OCI-LY7 (cell line): ENCODE measurements at regions of chr12 and their contacts with region 1.

Region 1: DNA sequence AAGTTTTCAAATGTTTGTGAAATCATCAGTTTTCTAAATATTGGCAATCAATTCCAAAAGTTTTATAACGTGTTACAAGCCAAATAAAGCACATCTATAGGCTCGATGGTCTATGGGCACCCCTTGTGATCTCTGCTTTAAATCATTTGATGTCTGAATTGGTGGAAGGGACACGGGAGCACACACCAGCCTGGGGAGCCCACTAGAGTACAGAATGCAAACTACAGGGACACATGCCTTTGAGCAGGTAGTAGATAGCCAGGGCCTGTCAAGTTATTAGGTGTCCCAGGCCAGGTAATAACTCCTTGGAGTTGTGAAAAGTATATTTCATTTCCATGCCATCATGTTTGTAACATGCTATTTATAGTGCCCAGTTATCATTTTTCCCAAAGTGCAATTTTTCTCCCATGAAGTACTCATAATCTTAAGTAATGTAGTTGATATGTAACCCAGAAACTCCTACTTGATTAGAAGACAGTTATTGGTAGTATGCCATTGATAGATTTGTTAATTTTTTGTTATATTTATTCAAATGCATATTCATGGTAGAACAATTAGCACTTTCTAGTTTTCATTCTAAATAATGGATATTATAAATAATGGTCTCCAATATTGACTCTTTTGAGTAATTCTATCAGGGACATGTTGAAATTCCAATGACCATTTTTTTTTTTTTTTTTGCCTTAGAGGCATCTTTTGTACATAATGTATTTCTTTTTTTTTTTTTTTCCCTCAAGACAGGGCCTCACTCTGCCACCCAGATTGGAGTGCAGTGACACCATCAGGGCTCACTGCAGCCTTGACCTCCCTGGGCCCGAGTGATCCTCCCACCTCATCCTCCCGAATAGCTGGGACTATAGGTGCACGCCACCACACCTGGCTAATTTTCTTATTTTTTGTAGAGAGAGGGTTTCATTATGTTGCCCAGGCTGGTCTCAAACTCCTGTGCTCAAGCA is 96.9 kb upstream of the FGD4 start:
- DNase-seq: peak; percentile 89
- H3K4me3 ChIP-seq: peak overlapping the region; percentile 36
- H3K27ac ChIP-seq: peak overlapping the region; percentile 94
- H3K4me1 ChIP-seq: peaks cover 71% of the 10 kb centered on the region
- CTCF ChIP-seq: peak; percentile 93

Region 2: GRCh38 chr12:31682136-31682962 is 620.1 kb before region 1 on chr12:
- CTCF ChIA-PET with region 1: no interaction called
- POLR2A ChIA-PET with region 1: no interaction called
- intact Hi-C with region 1: loop called (anchors 1 kb)
- DNase-seq: peak; percentile 95
- H3K4me3 ChIP-seq: no peak overlapping the region
- H3K27ac ChIP-seq: peak overlapping the region; percentile 56
- H3K4me1 ChIP-seq: peaks cover 34% of the 10 kb centered on the region
- CTCF ChIP-seq: peak; percentile 92

Region 3: DNA sequence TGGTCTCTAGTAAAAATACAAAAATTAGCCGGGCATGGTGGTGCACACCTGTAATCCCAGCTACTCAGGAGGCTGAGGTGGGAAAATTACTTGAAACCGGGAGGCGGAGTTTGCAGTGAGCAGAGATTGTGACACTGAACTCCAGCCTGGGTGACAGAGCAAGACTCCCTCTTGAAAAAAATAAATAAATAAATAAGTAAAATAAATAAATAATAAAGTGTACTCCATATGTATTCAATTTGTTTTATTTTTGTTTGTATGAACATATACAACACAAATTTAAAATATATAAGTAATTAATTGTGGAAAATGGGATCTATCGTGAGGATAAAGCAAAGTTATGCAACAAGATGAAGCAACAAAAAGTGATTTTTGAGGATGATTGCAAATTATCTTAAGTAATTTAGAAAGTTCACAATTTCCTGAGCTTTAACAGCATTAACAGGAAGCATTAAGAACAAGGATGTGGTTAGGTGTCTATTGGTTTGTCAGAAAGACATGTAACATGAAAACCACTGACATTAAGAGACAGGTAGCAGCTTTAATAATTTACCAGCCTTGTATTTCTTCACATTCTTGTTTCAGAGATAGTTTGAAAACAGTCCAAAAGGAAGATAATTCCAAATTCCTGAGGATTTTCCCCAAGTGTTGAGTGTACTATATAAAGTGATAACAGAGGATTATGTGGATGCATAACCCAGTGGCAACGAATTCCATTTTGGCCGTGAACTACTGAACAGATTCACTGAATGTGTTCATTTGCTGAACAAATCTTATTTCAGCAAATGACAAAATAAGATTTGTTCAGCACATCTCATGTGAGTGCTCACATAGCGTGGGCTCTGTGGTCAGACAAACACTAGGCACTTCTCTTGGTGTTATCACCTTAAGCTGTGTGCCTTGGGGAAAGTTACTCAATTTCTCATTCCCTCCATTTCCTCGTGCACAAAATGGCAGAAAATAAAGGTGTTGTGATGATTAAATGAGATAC is 411.9 kb before region 1 on chr12:
- CTCF ChIA-PET with region 1: no interaction called
- POLR2A ChIA-PET with region 1: interaction called, 5 read pairs
- intact Hi-C with region 1: loop called (anchors 5 kb)
- DNase-seq: peak; percentile 64
- H3K4me3 ChIP-seq: peak overlapping the region; percentile 12
- H3K27ac ChIP-seq: peak overlapping the region; percentile 54
- H3K4me1 ChIP-seq: peaks cover 55% of the 10 kb centered on the region
- CTCF ChIP-seq: no peak

Region 4: DNA sequence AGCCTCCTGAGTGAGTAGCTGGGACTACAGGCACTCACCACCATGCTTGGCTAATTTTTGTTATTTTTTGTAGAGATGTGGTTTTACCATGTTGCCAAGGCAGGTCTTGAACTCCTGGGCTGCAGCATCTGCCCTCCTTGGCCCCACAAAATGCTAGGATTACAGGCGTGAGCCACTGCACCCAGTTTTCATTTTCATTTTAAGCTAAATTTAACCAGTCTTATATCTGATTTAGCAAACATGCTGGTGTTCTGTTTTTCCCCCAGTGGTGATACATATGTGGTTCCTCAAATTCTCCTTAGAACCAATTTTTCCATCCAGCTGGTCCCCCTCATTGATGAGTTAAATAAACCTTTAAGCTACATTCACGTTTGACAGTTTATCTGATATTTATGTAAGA is 239.6 kb before region 1 on chr12:
- CTCF ChIA-PET with region 1: no interaction called
- POLR2A ChIA-PET with region 1: interaction called, 6 read pairs
- intact Hi-C with region 1: loop called (anchors 1 kb)
- DNase-seq: peak; percentile 48
- H3K4me3 ChIP-seq: no peak overlapping the region
- H3K27ac ChIP-seq: peak overlapping the region; percentile 15
- H3K4me1 ChIP-seq: peaks cover 24% of the 10 kb centered on the region
- CTCF ChIP-seq: peak; percentile 20; the same call in 1 of the 2 replicates

Region 5: GRCh38 chr12:32139064-32139421 is 163.5 kb before region 1 on chr12:
- CTCF ChIA-PET with region 1: no interaction called
- POLR2A ChIA-PET with region 1: interaction called, 5 read pairs
- intact Hi-C with region 1: loop called (anchors 2 kb)
- DNase-seq: peak; percentile 94
- H3K4me3 ChIP-seq: peak overlapping the region; percentile 63
- H3K27ac ChIP-seq: peak overlapping the region; percentile 98
- H3K4me1 ChIP-seq: peaks cover 87% of the 10 kb centered on the region
- CTCF ChIP-seq: no peak

Region 6: DNA sequence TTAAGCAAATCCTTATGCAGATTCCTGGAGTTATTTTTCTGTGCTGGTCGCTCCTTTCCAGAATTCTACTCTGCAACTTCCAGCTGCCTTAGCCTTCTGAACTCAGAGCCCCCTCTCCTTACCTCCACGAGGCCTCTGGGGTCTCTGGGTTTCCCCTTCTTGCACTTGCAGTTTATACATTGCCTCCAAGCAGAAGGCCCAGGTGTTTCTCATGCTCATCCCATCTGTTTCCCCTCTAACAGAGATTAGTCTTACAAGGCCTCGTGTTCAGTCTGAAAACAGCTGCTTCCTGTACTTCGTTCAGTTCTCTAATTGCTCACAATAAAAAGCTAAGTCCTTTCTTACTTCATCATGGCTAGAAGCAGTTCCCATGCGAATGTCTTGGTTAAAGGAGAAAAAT is 37.5 kb before region 1 on chr12:
- CTCF ChIA-PET with region 1: interaction called, 3 read pairs
- POLR2A ChIA-PET with region 1: interaction called, 17 read pairs
- intact Hi-C with region 1: loop called (anchors 1 kb)
- DNase-seq: peak; percentile 96
- H3K4me3 ChIP-seq: peak overlapping the region; percentile 56
- H3K27ac ChIP-seq: peak overlapping the region; percentile 99
- H3K4me1 ChIP-seq: peaks cover 95% of the 10 kb centered on the region
- CTCF ChIP-seq: no peak

Region 7: DNA sequence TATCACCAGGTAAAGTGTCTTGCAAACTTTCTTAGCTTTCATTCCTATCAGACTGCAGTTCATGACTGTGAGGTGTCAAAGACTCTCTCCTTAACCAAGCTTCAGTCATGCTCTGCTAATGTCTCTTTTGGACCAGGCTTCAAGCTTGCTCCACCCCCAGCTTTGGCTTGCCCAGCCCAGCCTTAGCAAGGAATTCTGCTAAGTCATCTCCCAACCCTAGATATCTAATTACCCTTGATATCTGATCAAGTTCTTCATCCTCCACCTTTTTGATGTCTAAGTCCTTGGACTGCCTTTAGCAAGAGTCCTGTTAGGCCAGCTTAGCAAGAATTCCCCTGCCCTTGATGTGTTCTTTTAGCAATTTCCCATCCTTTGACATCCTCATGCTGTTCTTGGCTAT is 12.1 kb before region 1 on chr12:
- CTCF ChIA-PET with region 1: no interaction called
- POLR2A ChIA-PET with region 1: interaction called, 17 read pairs
- intact Hi-C with region 1: no loop called
- DNase-seq: no peak
- H3K4me3 ChIP-seq: no peak overlapping the region
- H3K27ac ChIP-seq: no peak overlapping the region
- H3K4me1 ChIP-seq: peaks cover 17% of the 10 kb centered on the region
- CTCF ChIP-seq: no peak